ENCODE measurements at regions of chr10 and their contacts with region 1.

Region 1: GRCh38 chr10:124403548-124403947 is 15.2 kb downstream of the OAT start:
- DNase-seq: no peak
- ATAC-seq: peak; percentile 98
- H3K4me3 Mint-ChIP-seq: no peak overlapping the region
- H3K27ac Mint-ChIP-seq: peak overlapping the region; percentile 66
- H3K4me1 Mint-ChIP-seq: peaks cover 11% of the 10 kb centered on the region
- H3K27me3 Mint-ChIP-seq: no peaks in the 10 kb centered on the region

Region 2: DNA sequence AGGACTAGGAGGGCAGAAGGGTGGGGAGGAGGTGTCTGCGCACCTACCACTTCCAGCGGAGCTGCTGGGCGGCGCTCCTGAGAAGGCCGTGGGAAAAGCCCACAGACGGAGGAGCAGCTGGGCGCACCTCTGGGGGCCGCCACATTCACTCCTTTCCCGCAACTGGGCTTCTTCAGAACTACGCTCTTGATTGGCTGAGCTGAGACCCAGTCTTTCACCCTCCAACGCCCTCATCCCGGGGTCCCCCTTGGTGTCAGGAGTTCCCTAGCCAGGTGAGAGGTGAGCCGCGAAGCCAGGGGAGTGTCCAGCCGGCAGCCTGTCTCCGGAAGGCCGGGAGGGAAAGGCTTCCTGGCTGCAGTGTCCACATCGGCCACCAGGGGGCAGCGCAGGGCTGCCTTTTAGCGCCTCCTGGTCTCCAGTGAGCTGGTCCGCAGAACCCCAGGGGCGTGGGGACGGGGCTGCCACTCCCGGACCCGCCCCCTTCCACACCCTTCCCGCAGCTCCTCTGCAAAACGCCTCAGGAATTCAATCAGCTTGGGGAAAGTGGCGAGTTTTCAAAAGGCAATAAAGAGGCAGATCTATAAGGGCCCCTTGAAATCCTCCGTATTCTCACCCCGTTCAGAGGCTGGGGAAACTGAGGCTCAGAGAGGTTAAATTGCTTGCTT is 409.0 kb before region 1 on chr10:
- CTCF ChIA-PET with region 1: interaction called, 18 read pairs
- DNase-seq: peak; percentile 79
- ATAC-seq: peak; percentile 90
- H3K4me3 Mint-ChIP-seq: peak overlapping the region; percentile 11
- H3K27ac Mint-ChIP-seq: no peak overlapping the region
- H3K4me1 Mint-ChIP-seq: peaks cover 5% of the 10 kb centered on the region
- H3K27me3 Mint-ChIP-seq: peaks cover 65% of the 10 kb centered on the region

Region 3: DNA sequence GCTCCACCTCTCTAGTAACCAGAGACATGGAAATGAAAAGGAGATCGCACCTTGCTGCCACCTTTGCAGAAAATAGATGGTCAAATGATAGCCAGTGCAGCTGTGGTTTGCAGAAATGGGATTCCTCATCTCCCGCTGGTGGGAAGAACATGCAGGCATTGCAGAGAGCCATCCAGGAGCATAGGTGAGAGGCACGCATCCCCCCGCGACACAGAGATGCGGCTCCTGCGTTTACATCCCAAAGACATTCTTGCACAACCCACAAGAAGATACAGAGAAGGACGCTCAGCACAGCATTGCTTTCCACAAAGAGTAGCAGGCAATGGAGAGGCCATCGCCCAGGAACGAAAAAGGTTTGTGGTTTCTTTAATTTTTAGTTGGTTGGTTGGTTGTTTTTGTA is 41.0 kb before region 1 on chr10:
- CTCF ChIA-PET with region 1: no interaction called
- DNase-seq: no peak
- ATAC-seq: no peak
- H3K4me3 Mint-ChIP-seq: no peak overlapping the region
- H3K27ac Mint-ChIP-seq: no peak overlapping the region
- H3K4me1 Mint-ChIP-seq: no peaks in the 10 kb centered on the region
- H3K27me3 Mint-ChIP-seq: peaks cover 12% of the 10 kb centered on the region

Region 4: DNA sequence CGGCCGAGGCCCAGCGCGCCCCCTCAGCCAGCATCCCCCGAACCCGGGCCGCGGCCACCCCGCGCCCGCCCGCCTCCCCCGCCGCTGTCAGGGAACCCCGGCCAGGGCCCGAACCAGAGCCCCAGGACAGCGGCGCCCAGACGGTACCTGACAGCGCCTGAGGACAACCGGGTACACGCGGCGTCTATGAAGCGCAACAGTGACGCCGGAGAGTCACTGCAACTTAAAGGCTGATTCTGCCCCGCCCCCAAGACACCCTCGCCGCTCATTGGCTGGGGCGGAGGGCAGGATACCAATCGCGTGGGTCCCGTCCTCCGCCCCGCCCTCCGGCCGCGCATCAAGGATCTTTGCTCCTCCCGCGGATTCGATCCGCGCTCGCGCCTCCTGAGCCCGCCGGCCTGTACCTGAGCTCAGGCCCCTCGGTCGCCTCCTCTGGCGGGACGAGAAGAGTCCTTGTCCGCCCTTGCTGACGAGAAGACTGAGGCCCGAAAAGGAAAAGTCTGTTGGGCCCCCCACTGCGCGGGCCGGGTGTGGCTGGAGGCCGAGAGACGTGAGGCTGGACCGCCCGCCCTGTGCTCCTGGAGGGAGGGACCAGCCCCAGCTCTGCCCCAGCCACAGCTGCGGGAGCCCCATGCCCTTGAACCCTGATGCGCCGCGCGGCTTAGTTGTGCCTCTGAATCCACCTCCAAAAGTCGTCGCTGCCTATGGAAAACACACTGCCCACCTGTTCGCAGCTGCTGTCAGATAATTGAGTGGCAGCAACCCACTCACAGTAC is 15.4 kb after region 1 on chr10 and contains the start of gene OAT:
- CTCF ChIA-PET with region 1: interaction called, 18 read pairs
- DNase-seq: peak; percentile 98
- ATAC-seq: peak; percentile 95
- H3K4me3 Mint-ChIP-seq: peak within 1 kb of the TSS; percentile 73
- H3K27ac Mint-ChIP-seq: peak within 1 kb of the TSS; percentile 65
- H3K4me1 Mint-ChIP-seq: peaks cover 14% of the 10 kb centered on the region
- H3K27me3 Mint-ChIP-seq: peaks cover 7% of the 10 kb centered on the region
- total RNA-seq, gene OAT: 18.7 to 32.3 TPM